Esophagus muscularis mucosa (tissue), 4 donors: ENCODE measurements at regions of chr12 and their contacts with region 1.

Region 1: GRCh38 chr12:50132505-50133135 is 20.6 kb downstream of the COX14 start:
- DNase-seq: no peak
- H3K4me3 ChIP-seq: no peak overlapping the region
- H3K27ac ChIP-seq: peak overlapping the region in 1 of 4 donors; percentile 31
- H3K4me1 ChIP-seq: peaks cover 3 to 30% (median 17%) of the 10 kb centered on the region in 4 donors
- H3K27me3 ChIP-seq: no peaks in the 10 kb centered on the region
- CTCF ChIP-seq: peak in 1 of 3 experiments; percentile 69
- EP300 ChIP-seq: no peak
- POLR2A ChIP-seq: no peak

Region 2: GRCh38 chr12:49990273-49990672 is 142.3 kb before region 1 on chr12:
- intact Hi-C with region 1: no loop called
- DNase-seq: no peak
- H3K4me3 ChIP-seq: no peak overlapping the region
- H3K27ac ChIP-seq: no peak overlapping the region
- H3K4me1 ChIP-seq: peaks cover 0 to 14% (median 12%) of the 10 kb centered on the region in 4 donors
- H3K27me3 ChIP-seq: no peaks in the 10 kb centered on the region
- CTCF ChIP-seq: no peak
- EP300 ChIP-seq: no peak
- POLR2A ChIP-seq: no peak

Region 3: DNA sequence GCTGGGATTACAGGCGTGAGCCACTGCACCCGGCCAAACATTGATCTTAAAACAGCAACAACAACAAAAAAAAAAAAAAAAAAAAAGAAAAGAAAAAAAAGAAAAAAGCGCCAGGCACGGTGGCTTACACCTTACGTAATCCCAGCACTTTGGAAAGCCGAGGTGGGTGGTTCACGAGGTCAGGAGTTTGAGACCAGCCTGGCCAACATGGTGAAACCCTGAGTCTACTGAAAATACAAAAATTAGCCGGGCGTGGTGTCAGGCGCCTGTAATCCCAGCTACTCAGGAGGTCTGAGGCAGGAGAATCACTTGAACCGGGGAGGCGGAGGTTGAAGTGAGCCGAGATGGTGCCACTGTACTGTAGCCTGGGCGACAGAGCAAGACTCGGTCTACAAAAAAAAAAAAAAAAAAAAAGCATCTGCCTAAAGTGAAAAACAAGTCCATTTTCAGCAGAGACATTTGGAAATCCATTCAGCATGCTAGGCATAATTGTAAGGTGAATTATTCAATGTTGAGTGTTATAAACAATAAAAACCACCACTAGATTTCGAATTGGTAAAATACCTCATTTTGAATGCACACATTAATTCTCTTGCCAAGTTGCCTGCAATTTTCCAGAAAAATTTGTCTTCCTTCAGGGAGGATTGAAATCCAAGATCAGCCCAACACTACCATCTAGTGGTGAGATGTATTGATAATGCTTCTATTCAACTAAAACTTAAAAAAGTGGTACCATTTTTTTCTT is 42.5 kb after region 1 on chr12:
- intact Hi-C with region 1: loop called (anchors 5 kb)
- DNase-seq: no peak
- H3K4me3 ChIP-seq: no peak overlapping the region
- H3K27ac ChIP-seq: peak overlapping the region in 1 of 4 donors; percentile 36
- H3K4me1 ChIP-seq: peaks cover 0 to 6% (median 2%) of the 10 kb centered on the region in 4 donors
- H3K27me3 ChIP-seq: no peaks in the 10 kb centered on the region
- CTCF ChIP-seq: peak; percentile 65 to 71 (median 69)
- EP300 ChIP-seq: no peak
- POLR2A ChIP-seq: no peak